ENCODE measurements at regions of chr14 and their contacts with region 1.

Region 1: GRCh38 chr14:75979071-75979571 is 2.7 kb downstream of the TGFB3 start:
- DNase-seq: peak; percentile 4

Region 2: GRCh38 chr14:75711104-75711795 is 267.9 kb before region 1 on chr14:
- in situ Hi-C with region 1: loop called (anchors 10 kb)
- DNase-seq: peak; percentile 43

Region 3: GRCh38 chr14:76227448-76228050 is 248.4 kb after region 1 on chr14:
- in situ Hi-C with region 1: no loop called
- DNase-seq: no peak

Measured in Caki2 (cell line).